Common myeloid progenitor, CD34-positive (primary cell): ENCODE measurements at regions of chr7 and their contacts with region 1.

Region 1: DNA sequence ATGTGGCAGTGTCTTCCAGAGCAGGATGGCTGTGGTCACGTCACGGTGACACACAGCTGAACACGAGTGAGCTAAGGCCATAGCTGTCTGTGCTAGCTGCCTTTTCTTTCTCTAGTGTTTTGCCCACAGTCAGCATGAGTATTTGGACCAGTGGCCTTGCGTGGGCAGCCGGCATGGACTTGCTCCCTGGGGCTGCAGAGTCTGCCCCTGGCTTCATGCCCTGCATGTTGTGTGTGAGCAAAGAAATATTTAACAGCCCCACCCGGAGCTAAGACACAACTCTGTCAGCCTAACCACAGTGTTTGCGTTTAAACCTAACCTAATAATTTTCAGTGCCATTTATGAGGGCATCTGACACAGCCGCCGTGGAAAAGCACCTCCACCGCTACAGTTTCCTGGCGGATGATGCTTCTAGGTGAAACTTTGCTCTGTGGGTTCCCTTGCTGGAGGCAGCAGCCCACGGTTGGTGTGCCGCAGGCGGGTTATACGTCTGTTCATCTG is 14.6 kb downstream of the CHST12 start:
- DNase-seq: peak in 2 of 3 donors; percentile 82 to 86
- H3K4me3 ChIP-seq: no peak overlapping the region
- H3K27ac ChIP-seq: no peak overlapping the region
- H3K4me1 ChIP-seq: peaks cover 10 to 55% (median 31%) of the 10 kb centered on the region in 4 experiments
- H3K27me3 ChIP-seq: no peaks in the 10 kb centered on the region

Region 2: GRCh38 chr7:2288503-2288902 is 129.5 kb before region 1 on chr7:
- CTCF ChIA-PET with region 1: no interaction called
- POLR2A ChIA-PET with region 1: no interaction called
- DNase-seq: peak in 1 of 3 donors; percentile 14
- H3K4me3 ChIP-seq: no peak overlapping the region
- H3K27ac ChIP-seq: no peak overlapping the region
- H3K4me1 ChIP-seq: peaks cover 0 to 2% (median 0%) of the 10 kb centered on the region in 4 experiments
- H3K27me3 ChIP-seq: no peaks in the 10 kb centered on the region

Region 3: GRCh38 chr7:2336626-2337299 is 81.3 kb before region 1 on chr7:
- CTCF ChIA-PET with region 1: no interaction called
- POLR2A ChIA-PET with region 1: no interaction called
- DNase-seq: no peak
- H3K4me3 ChIP-seq: no peak overlapping the region
- H3K27ac ChIP-seq: no peak overlapping the region
- H3K4me1 ChIP-seq: no peaks in the 10 kb centered on the region
- H3K27me3 ChIP-seq: no peaks in the 10 kb centered on the region

Region 4: DNA sequence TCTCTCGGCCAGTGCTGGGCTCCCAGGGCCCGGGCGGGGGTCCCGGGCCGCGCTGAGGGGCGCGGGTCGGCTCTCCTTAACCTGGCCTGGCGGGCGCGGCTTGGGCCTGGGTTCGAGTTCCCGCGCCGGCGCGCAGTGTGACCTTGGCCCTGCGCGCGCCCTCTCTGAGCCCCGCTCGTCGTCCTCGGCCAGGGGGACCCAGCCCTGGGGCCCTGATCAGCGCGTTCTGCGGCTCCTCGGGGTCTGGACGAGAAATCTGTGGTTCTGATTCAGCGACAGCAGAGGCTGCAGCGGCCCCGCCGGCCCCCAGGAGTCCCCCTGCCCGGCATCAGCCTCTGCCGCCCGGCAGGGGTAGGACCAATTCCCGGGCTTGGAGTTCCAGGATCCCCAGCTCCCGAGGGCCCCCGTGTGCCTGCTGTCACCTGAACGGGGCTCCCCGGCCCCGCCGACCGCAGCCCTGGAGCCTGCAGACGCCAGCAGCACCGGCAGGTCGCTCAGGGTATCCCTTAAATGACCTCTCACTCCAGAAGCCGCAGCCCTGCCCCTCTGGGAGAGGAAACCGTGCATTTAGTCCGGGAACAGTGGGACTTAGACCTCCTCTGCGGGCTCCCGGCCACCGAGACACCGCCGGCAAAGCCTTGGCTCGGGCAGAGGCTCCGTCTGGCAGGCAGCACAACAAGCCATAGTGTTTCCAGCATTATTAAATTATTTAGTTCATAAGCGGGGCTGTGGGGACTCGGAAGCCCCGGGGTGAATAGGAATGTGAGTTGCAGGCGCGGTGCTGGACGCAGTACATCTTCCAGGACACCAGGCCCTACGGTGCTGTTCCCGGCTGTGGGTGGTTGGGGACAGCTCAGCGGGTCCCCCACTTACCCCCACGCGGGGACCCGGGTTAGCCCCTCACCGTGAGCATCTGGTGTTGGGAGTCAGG is 14.0 kb before region 1 on chr7:
- CTCF ChIA-PET with region 1: interaction called, 24 read pairs
- POLR2A ChIA-PET with region 1: interaction called, 3 read pairs
- DNase-seq: peak in 1 of 3 donors; percentile 42
- H3K4me3 ChIP-seq: peak overlapping the region; percentile 61 to 96 (median 90)
- H3K27ac ChIP-seq: peak overlapping the region; percentile 54 to 86
- H3K4me1 ChIP-seq: peaks cover 11 to 86% (median 74%) of the 10 kb centered on the region in 4 experiments
- H3K27me3 ChIP-seq: no peaks in the 10 kb centered on the region

Region 5: GRCh38 chr7:2451171-2452073 is 33.4 kb after region 1 on chr7:
- CTCF ChIA-PET with region 1: interaction called, 10 read pairs
- POLR2A ChIA-PET with region 1: no interaction called
- DNase-seq: peak; percentile 67 to 79 (median 77)
- H3K4me3 ChIP-seq: peak overlapping the region in 6 of 7 experiments; percentile 44 to 77 (median 60)
- H3K27ac ChIP-seq: peak overlapping the region in 1 of 2 experiments; percentile 14
- H3K4me1 ChIP-seq: peaks cover 0 to 15% (median 12%) of the 10 kb centered on the region in 4 experiments
- H3K27me3 ChIP-seq: no peaks in the 10 kb centered on the region

Region 6: DNA sequence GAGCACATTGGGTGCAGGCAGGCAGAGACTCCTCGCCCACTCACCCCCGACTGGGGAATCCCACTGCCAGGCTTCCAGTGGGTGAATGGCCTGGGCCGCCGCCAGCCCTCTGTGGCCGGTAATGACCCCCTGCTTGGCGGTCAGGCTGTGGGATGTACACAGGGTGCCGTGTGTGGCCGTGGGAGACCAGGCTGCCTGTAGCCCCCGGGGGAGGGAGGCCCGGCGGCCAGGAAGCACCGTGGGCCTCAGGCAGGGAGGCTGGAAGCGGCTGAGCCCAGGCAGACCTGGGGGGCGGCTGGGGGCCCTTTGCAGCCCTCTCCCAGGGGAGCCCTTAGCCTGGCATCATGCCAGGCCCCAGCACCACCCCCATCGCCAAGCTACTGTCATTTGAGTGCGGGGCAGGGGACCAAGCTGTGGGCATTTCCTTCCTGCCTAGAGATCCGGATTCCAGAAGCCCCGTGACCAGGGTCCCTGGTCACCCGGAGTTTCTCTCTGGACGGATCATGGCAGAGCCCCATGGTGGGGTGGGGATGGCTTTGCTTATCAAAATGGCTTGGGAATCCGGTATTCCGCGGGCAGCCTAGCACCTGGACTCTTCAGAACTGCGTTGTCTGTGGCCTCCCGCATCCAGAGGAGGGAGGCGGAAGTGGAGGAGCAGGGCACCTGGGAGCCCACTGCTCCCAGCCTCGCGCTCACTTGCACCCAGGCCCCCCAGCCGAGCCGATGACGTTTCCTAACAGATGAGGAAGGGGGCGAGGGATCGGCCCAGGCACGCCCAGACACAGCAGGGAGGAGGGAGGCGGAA is 214.9 kb after region 1 on chr7:
- CTCF ChIA-PET with region 1: no interaction called
- POLR2A ChIA-PET with region 1: no interaction called
- DNase-seq: peak; percentile 41 to 76 (median 72)
- H3K4me3 ChIP-seq: peak overlapping the region; percentile 53 to 95 (median 84)
- H3K27ac ChIP-seq: peak overlapping the region; percentile 54 to 83
- H3K4me1 ChIP-seq: peaks cover 0 to 63% (median 45%) of the 10 kb centered on the region in 4 experiments
- H3K27me3 ChIP-seq: no peaks in the 10 kb centered on the region